ENCODE measurements at regions of chr1 and their contacts with region 1.

Region 1: GRCh38 chr1:201737352-201738060 is 91.5 kb upstream of the IPO9 start:
- DNase-seq: no peak
- ATAC-seq: no peak
- H3K4me3 ChIP-seq: no peak overlapping the region
- H3K27ac ChIP-seq: no peak overlapping the region
- H3K4me1 ChIP-seq: peaks cover 4 to 14% of the 10 kb centered on the region in 2 experiments; a peak in 4 of 5 replicates
- H3K27me3 ChIP-seq: peaks cover 17 to 41% of the 10 kb centered on the region in 2 experiments
- CTCF ChIP-seq: no peak
- EP300 ChIP-seq: no peak
- POLR2A ChIP-seq: no peak
- RAD21 ChIP-seq: no peak

Region 2: DNA sequence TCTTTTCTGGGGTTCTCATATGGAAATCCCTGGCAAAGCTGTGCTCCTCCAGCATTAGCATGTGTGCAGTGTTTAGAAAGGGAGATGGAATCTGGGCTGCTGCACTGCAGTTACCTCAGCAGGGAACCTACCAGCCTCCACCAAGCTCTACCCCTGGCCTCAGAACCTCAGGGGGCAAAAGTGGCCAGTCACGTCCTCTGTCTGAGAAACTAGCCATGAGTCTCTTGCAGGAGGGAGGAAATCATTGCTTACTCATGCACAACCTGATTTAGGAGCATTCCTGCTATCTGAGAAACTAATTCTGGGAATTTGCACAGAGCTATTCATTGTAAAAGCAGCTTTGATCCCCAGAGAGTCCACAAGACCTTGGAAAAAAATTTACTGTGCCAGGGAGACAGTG is 10.8 kb after region 1 on chr1:
- CTCF ChIA-PET with region 1: no interaction called
- POLR2A ChIA-PET with region 1: interaction called, 10 read pairs
- in situ Hi-C with region 1: no loop called
- intact Hi-C with region 1: no loop called
- DNase-seq: no peak
- ATAC-seq: no peak
- H3K4me3 ChIP-seq: no peak overlapping the region
- H3K27ac ChIP-seq: no peak overlapping the region
- H3K4me1 ChIP-seq: no peaks in the 10 kb centered on the region; a peak in 2 of 5 replicates
- H3K27me3 ChIP-seq: no peaks in the 10 kb centered on the region; a peak in 1 of 5 replicates
- CTCF ChIP-seq: no peak
- EP300 ChIP-seq: no peak
- POLR2A ChIP-seq: no peak
- RAD21 ChIP-seq: no peak

Measured in K562 (cell line).